Left cardiac atrium (tissue), 4 donors: ENCODE measurements at regions of chrX and their contacts with region 1.

Region 1: DNA sequence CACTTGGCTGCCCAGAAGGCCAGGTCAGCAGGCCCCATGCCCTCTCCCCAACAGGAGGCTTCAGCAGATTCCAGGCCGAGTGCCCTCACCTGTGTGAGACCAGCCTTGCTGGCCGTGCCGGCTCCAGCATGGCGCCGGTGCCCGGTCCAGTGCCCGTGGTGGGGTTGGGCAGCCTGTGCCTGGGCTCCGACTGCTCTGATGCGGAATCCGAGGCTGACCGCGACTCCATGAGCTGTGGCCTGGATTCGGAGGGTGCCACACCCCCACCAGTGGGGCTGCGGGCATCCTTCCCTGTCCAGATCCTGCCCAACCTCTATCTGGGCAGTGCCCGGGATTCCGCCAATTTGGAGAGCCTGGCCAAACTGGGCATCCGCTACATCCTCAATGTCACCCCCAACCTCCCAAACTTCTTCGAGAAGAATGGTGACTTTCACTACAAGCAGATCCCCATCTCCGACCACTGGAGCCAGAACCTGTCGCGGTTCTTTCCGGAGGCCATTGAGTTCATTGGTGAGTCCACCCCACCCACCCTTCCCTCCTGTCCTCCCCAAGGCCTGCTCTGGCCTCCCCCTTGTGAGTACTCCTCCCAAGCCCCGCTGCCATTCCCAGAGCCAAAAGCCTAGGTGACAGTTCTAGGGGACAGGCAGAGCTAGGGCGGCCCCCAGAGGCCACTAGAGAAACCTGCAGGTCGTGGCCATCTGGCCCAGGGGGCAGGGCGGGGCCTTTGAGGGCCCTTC is 2.3 kb downstream of the DUSP9 start:
- DNase-seq: peak; percentile 27
- ATAC-seq: peak; percentile 16 to 51

Region 2: DNA sequence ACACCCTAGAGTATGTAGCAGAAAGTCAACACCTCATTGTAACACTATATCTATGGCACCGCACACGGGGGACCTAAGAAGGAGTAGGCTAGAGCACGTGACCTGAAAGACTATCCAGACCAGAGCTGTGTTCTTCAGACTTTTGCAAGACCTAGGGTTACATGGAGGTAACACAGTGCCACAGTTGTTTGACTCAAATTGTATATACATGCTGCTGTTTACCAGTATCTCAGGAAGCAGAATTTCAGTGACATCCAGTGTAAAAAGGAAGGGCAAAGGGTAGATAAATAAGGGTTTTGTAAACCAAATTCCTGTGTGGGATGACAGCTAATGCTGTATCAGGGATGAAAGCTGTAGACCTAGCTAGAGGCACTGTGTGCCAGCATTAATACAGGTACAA is 546.9 kb before region 1 on chrX:
- intact Hi-C with region 1: no loop called
- DNase-seq: no peak
- ATAC-seq: no peak

Region 3: GRCh38 chrX:153554519-153555167 is 94.7 kb before region 1 on chrX:
- intact Hi-C with region 1: loop called in 1 of 2 experiments (anchors 10 kb)
- DNase-seq: peak; percentile 73
- ATAC-seq: peak; percentile 54 to 67